Motor neuron (in vitro differentiated cells): ENCODE measurements at regions of chr5 and their contacts with region 1.

Region 1: GRCh38 chr5:143985832-143986485 is 174.0 kb downstream of the HMHB1 start:
- ATAC-seq: peak in 5 of 8 experiments; percentile 28 to 84 (median 65)
- H3K4me3 ChIP-seq: no peak overlapping the region
- H3K27ac ChIP-seq: no peak overlapping the region
- H3K4me1 ChIP-seq: peaks cover 7 to 14% of the 10 kb centered on the region in 2 donors

Region 2: DNA sequence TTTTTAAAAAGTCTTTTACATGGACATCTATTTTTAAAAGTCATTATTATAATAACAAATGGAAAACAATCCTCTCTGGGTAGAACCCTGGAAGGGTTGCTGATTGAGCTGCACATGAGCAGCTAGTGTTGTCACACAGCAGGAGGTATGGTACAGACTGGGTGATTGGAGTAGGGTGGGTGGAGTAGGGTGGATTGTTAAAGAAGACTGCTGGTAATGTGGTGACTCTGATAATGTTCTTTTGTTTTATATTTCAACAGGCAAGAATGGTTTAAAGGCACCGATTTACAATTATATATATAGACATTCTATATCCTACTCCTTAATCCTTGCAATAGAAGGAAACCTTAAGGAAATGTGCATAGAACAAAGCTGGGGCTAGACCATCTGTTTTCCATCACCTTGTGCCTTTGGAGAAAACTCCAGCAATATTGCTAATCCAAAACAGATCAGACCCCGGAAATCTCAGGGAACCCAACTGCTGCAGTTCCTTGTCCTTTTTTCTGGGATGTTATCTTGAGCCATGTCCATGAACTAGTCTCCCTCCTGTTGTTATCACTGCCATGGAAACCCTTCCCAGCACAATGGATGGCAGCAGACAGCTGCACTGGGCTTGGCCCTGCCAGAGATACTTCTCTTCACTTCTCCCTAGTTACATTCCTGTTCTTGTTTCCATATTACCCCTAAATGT is 54.8 kb after region 1 on chr5:
- in situ Hi-C with region 1: loop called in 1 of 9 experiments (anchors 10 kb)
- ATAC-seq: peak in 4 of 8 experiments; percentile 26 to 77 (median 53)
- H3K4me3 ChIP-seq: no peak overlapping the region
- H3K27ac ChIP-seq: no peak overlapping the region
- H3K4me1 ChIP-seq: peaks cover 0 to 2% of the 10 kb centered on the region in 2 donors

Region 3: GRCh38 chr5:144162686-144163085 is 176.7 kb after region 1 on chr5:
- in situ Hi-C with region 1: no loop called
- ATAC-seq: no peak
- H3K4me3 ChIP-seq: no peak overlapping the region
- H3K27ac ChIP-seq: no peak overlapping the region
- H3K4me1 ChIP-seq: peaks cover 0 to 9% of the 10 kb centered on the region in 2 donors